K562 (cell line): ENCODE measurements at regions of chr19 and their contacts with region 1.

Region 1: GRCh38 chr19:47600246-47601179 is 8.4 kb upstream of the BICRA start:
- DNase-seq: peak; percentile 98 to 100 (median 99)
- ATAC-seq: peak; percentile 98
- H3K4me3 ChIP-seq: peak overlapping the region; percentile 50
- H3K27ac ChIP-seq: peak overlapping the region; percentile 65
- H3K4me1 ChIP-seq: peaks cover 7 to 14% of the 10 kb centered on the region in 2 experiments; a peak in 4 of 5 replicates
- H3K27me3 ChIP-seq: no peaks in the 10 kb centered on the region
- CTCF ChIP-seq: no peak; a peak in 1 of 6 replicates
- EP300 ChIP-seq: no peak; the same call in 1 of the 2 replicates
- POLR2A ChIP-seq: peak; percentile 86
- RAD21 ChIP-seq: no peak; a peak in 1 of 4 replicates

Region 2: GRCh38 chr19:47447470-47448359 is 152.8 kb before region 1 on chr19:
- CTCF ChIA-PET with region 1: no interaction called
- POLR2A ChIA-PET with region 1: no interaction called
- in situ Hi-C with region 1: no loop called
- intact Hi-C with region 1: loop called (anchors 10 kb)
- DNase-seq: peak; percentile 96 to 98 (median 96)
- ATAC-seq: peak; percentile 92
- H3K4me3 ChIP-seq: peak overlapping the region; percentile 60
- H3K27ac ChIP-seq: peak overlapping the region; percentile 84
- H3K4me1 ChIP-seq: peaks cover 13 to 39% of the 10 kb centered on the region in 2 experiments; a peak in 4 of 5 replicates
- H3K27me3 ChIP-seq: peaks cover 19 to 42% of the 10 kb centered on the region in 2 experiments; a peak in 4 of 5 replicates
- CTCF ChIP-seq: no peak; a peak in 1 of 6 replicates
- EP300 ChIP-seq: no peak
- POLR2A ChIP-seq: no peak
- RAD21 ChIP-seq: no peak

Region 3: DNA sequence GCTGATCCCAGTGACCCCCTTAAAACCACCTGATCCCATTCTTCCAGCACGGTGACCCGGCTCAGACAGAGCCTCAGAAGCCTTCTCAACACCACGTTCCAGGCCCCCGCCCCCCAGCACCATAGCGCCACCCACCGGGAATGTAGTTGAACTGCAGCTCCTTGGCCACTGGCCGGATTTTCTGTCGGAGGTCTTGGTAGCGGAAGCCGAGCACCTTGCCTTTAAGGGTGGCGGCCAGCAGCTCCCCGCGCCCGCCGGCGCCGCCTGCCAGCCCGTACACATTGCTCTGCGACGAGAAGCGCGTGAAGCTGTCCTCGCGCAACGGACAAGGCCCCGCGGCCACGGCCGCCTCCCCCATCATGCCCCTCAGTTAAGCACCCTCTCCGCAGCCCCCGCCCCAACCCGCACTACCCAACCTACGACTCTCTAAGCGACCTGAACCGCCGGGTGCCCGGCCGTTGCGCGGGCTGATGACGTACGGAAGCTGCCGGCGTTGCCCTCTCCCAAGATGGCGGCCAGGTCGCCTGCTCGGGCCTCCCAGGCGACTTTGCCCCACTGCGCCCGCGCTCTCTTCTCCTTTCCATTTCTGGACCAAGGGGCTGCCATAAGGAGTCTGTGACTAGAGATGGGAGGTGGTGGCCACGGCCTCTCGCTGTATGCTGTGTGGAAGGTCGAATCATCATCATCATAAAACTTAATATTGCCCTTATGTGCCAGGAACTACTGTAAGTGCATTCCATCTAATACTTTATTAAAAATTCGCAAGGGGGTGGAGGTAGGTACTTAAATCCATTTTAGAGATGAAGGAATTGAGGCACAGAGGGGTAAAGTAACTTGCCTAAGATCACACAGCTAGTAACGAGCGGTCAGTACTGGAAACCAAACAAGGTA is 116.5 kb before region 1 on chr19 and contains the start of gene KPTN:
- CTCF ChIA-PET with region 1: no interaction called
- POLR2A ChIA-PET with region 1: no interaction called
- in situ Hi-C with region 1: no loop called
- intact Hi-C with region 1: no loop called
- DNase-seq: peak; percentile 92 to 94 (median 94)
- ATAC-seq: peak; percentile 89
- H3K4me3 ChIP-seq: peak within 1 kb of the TSS; percentile 67
- H3K27ac ChIP-seq: peak within 1 kb of the TSS; percentile 88
- H3K4me1 ChIP-seq: peaks cover 7 to 44% of the 10 kb centered on the region in 2 experiments; a peak in 3 of 5 replicates
- H3K27me3 ChIP-seq: no peaks in the 10 kb centered on the region
- CTCF ChIP-seq: peak; percentile 94 to 99 (median 97)
- EP300 ChIP-seq: no peak; the same call in 1 of the 2 replicates
- POLR2A ChIP-seq: peak; percentile 87
- RAD21 ChIP-seq: peak; percentile 69 to 83
- polyA plus RNA-seq, gene KPTN: 0.56 to 2.7 TPM

Region 4: DNA sequence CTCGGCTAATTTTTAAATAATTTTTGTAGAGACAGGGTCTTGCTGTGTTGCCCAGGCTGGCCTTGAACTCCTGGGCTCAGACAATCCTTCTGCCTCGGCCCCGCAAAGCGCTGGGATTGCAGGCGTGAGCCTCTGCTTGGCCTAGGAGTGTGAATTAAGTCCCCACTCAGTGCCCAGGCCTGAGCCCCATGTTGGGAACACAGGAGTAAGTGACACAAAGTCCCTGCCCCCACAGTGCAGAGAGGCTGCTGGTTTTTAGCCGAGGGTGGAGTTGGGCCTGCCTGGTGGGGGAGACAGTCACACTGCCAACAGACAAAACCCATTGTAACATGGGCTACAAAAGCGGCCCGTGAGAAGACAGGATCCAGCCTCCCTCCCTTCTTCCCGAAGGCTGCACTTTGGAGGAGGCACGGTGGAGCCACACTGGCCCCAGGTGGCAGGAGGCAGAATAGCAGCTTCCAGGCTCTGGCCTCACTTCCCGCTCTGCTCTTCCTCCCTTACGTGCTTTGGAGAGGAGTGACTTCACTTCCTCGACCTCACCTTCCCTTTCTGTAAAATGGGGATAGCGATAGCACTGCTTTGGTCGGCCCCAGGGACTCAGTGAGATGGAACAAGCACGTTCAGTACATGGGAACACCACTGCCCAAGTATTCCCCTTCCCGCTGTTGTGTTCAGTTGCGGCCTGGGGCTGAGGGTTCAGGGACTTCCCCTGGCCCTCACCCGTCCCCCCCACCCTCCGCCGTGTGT is 97.5 kb after region 1 on chr19:
- CTCF ChIA-PET with region 1: no interaction called
- POLR2A ChIA-PET with region 1: no interaction called
- in situ Hi-C with region 1: no loop called
- intact Hi-C with region 1: loop called (anchors 5 kb)
- DNase-seq: peak; percentile 82 to 86 (median 83)
- ATAC-seq: peak; percentile 92
- H3K4me3 ChIP-seq: no peak overlapping the region
- H3K27ac ChIP-seq: no peak overlapping the region
- H3K4me1 ChIP-seq: peaks cover 0 to 29% of the 10 kb centered on the region in 2 experiments; a peak in 2 of 5 replicates
- H3K27me3 ChIP-seq: no peaks in the 10 kb centered on the region
- CTCF ChIP-seq: peak; percentile 93 to 99 (median 98)
- EP300 ChIP-seq: no peak
- POLR2A ChIP-seq: no peak
- RAD21 ChIP-seq: peak; percentile 95 to 98

Region 5: GRCh38 chr19:47765523-47766358 is 165.2 kb after region 1 on chr19:
- CTCF ChIA-PET with region 1: no interaction called
- POLR2A ChIA-PET with region 1: no interaction called
- in situ Hi-C with region 1: no loop called
- intact Hi-C with region 1: no loop called
- DNase-seq: peak; percentile 60 to 86 (median 65)
- ATAC-seq: peak; percentile 95
- H3K4me3 ChIP-seq: no peak overlapping the region
- H3K27ac ChIP-seq: no peak overlapping the region
- H3K4me1 ChIP-seq: peaks cover 5 to 25% of the 10 kb centered on the region in 2 experiments; a peak in 3 of 5 replicates
- H3K27me3 ChIP-seq: no peaks in the 10 kb centered on the region
- CTCF ChIP-seq: peak; percentile 87 to 91 (median 89)
- EP300 ChIP-seq: no peak
- POLR2A ChIP-seq: no peak
- RAD21 ChIP-seq: peak; percentile 54 to 86